ENCODE measurements at regions of chr1 and their contacts with region 1.

Region 1: GRCh38 chr1:153572569-153573015 is 6.9 kb upstream of the S100A2 start:
- DNase-seq: peak; percentile 78 to 86
- ATAC-seq: peak; percentile 78 to 84
- H3K4me3 ChIP-seq: no peak overlapping the region
- H3K27ac ChIP-seq: peak overlapping the region in 1 of 2 experiments; percentile 39; a peak in 1 of 6 replicates
- H3K4me1 ChIP-seq: peaks cover 27% of the 10 kb centered on the region
- CTCF ChIP-seq: peak; percentile 92
- EP300 ChIP-seq: no peak
- POLR2A ChIP-seq: no peak
- RAD21 ChIP-seq: peak; percentile 95 to 99

Region 2: DNA sequence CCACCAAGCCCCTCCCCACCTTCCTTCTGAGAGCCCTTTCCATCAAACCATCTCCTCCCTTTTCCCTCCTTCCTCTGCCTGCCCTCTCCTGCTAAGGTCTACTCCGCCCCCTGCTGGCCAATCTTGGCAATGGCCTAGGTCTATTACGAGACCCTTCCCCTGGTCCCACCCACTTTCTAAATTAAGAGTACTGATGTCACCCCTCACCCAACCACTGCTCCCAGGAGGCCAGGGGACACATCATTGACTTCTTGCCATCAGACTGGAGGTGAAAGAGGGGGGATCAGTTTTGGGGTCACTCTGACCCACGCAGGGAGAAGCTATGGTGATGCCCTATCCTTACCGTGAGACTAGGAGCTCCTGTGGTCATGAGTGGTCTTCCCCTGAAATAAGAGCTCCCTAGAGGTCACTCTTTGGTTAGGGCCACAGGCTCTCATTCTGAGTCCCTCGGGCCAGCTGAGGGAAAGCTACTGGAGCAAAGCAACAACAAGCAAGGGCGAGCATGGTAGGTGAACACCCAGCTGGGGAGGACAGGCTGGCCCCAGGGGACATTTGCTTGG is 77.5 kb before region 1 on chr1:
- CTCF ChIA-PET with region 1: interaction called, 16 read pairs
- POLR2A ChIA-PET with region 1: no interaction called
- DNase-seq: peak; percentile 50 to 72
- ATAC-seq: peak; percentile 54 to 88; a peak in 4 of 6 replicates
- H3K4me3 ChIP-seq: no peak overlapping the region
- H3K27ac ChIP-seq: peak overlapping the region in 1 of 2 experiments; percentile 32; a peak in 2 of 6 replicates
- H3K4me1 ChIP-seq: peaks cover 18% of the 10 kb centered on the region
- CTCF ChIP-seq: peak; percentile 90
- EP300 ChIP-seq: no peak
- POLR2A ChIP-seq: no peak
- RAD21 ChIP-seq: peak; percentile 93 to 94

Region 3: DNA sequence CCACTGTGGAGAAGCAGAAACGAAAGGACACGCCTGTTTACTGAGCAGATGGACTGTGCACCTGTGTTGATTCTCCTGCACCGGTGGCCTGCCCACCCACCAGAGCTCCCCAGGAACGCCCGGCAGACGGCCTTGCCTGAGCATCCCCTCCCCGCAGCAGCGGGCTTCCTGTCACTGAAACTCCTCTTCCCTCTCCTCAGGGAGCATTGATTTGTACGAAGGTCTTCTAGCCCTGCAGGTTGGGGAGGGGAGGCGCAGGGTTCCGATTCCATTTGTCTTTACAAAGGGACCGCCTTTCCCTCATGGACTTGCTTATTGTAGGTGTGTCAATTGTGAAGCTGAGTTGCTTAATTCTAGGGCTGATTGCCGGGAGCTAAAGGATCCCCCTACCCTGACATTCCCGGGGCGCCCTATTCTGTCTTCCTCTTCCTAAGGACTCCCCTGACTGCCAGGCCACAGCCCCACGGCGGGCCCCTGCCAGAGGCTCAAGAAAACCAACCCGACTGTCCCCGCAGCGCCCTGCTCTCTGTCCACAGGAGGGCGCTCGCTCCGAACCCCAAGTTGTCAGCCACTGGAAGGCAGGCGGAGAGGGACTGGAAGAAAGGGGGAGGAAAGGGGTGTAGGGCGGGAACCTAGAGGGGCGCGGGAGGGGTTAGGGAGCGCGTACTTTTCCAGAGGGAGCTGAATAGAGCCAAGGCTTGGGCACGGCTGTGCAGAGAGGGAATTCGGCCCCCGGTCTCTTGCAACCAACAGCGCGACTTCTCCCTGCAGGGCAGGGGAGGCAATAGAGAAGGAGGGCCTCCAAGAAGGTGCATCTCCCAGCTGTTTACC is 39.6 kb before region 1 on chr1:
- CTCF ChIA-PET with region 1: interaction called, 471 read pairs
- POLR2A ChIA-PET with region 1: interaction called, 102 read pairs
- DNase-seq: peak; percentile 91 to 93
- ATAC-seq: peak; percentile 36 to 63
- H3K4me3 ChIP-seq: peak overlapping the region; percentile 68
- H3K27ac ChIP-seq: peak overlapping the region; percentile 98 to 100
- H3K4me1 ChIP-seq: peaks cover 29% of the 10 kb centered on the region
- CTCF ChIP-seq: peak; percentile 92
- EP300 ChIP-seq: no peak
- POLR2A ChIP-seq: peak; percentile 40
- RAD21 ChIP-seq: peak; percentile 87 to 91

Region 4: GRCh38 chr1:153592748-153593147 is 20.2 kb after region 1 on chr1:
- CTCF ChIA-PET with region 1: interaction called, 41 read pairs
- POLR2A ChIA-PET with region 1: no interaction called
- DNase-seq: no peak
- ATAC-seq: no peak
- H3K4me3 ChIP-seq: no peak overlapping the region
- H3K27ac ChIP-seq: no peak overlapping the region
- H3K4me1 ChIP-seq: peaks cover 8% of the 10 kb centered on the region
- CTCF ChIP-seq: no peak
- EP300 ChIP-seq: no peak
- POLR2A ChIP-seq: no peak
- RAD21 ChIP-seq: no peak

Region 5: DNA sequence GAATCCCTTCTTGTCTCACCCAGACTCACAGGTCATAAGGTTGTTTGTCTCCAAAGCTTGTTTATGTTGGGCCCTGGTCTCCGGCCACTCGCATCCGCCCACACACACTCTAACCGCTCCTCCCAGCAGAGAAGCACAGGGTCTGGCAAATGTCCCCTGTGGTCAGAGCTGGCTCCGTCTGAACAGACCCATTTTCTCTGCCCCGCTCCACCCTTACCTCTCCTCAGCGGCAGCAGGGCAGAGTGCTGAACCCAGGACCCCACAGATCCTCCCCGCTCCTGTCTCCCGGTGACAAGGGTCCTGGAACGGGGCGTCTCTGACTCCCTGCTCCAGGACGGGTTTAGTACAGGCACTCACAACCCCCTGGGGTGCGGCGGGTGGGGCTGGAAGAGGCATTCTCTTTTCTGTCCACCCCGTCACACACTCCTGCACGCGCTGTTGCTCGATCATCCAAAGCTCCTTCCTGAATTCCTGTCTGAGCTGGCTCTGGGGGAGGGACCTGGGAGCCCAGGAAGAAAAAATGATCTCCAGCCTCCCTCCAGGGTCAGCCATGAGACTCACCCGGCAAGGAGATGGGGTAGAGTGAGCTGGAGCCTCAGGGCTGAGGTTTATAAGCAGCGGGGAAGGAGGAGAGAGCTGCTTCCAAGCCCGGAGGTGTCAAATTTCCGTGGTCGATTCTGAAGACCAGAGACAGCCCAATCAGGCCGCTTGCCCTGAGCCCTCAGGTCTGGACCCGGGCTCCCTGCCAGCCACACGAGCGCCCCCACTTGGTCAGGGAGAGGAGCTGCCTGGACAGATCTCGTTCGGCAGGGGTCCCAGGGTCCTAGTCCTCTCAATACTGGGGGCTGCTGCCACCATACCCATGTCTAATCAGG is 54.6 kb after region 1 on chr1 and contains the start of gene S100A13:
- CTCF ChIA-PET with region 1: interaction called, 253 read pairs
- POLR2A ChIA-PET with region 1: interaction called, 19 read pairs
- DNase-seq: peak; percentile 85 to 91
- ATAC-seq: peak; percentile 80 to 87
- H3K4me3 ChIP-seq: peak within 1 kb of the TSS; percentile 57
- H3K27ac ChIP-seq: peak within 1 kb of the TSS; percentile 92
- H3K4me1 ChIP-seq: peaks cover 18% of the 10 kb centered on the region
- CTCF ChIP-seq: peak; percentile 73
- EP300 ChIP-seq: no peak
- POLR2A ChIP-seq: peak; percentile 75
- RAD21 ChIP-seq: peak; percentile 54 to 72
- polyA plus RNA-seq, gene S100A13: 98.9 and 113 TPM in 2 replicates

Region 6: DNA sequence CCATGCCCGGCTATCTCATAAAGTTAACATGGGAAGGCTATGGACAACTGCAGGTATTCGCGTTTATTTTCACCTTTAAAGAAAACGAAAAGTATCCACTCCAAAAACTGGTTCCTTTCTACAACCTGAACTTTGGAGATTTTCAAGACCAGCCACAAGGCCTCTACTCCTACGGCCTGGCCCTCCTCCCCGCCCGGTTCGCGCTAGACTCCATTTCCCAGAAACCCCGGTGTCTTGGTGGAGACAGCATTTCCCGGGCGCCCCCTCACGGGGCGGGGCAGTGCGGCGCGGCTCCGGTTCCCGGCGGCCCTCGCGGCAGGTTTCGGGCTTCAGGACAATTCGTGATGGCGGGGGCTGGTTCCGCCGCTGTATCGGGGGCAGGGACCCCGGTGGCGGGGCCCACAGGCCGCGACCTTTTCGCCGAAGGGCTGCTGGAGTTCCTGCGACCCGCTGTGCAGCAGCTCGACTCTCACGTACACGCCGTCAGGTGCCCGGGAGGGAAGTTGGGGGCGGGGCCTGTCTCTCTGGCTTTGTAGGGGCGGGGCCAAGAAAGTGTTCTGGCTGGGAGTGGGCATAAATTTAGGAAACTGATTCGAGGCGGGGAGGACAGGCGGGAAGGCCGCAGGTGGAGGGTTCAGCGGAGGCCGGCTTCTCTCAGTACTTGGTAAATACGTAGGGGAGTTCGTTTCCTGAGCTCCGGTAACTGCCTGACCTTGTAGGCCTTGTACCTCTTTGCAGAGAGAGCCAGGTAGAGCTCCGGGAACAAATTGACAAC is 86.0 kb after region 1 on chr1 and contains the start of gene SNAPIN:
- CTCF ChIA-PET with region 1: interaction called, 14 read pairs
- POLR2A ChIA-PET with region 1: no interaction called
- DNase-seq: peak; percentile 88 to 91
- ATAC-seq: peak; percentile 96 to 99
- H3K4me3 ChIP-seq: peak within 1 kb of the TSS; percentile 69
- H3K27ac ChIP-seq: peak within 1 kb of the TSS; percentile 86 to 94
- H3K4me1 ChIP-seq: peaks cover 12% of the 10 kb centered on the region; the same call in 2 of the 3 replicates
- CTCF ChIP-seq: no peak
- EP300 ChIP-seq: no peak
- POLR2A ChIP-seq: peak; percentile 49
- RAD21 ChIP-seq: no peak
- polyA plus RNA-seq, gene SNAPIN: 70.1 and 71.4 TPM in 2 replicates

Measured in A549 (cell line).